Naive thymus-derived CD4-positive, alpha-beta T cell (primary cell): ENCODE measurements at regions of chr4 and their contacts with region 1.

Region 1: GRCh38 chr4:87006676-87007527 is 72.1 kb downstream of the AFF1 start:
- DNase-seq: peak; percentile 85 to 92 (median 89)
- ATAC-seq: peak; percentile 88
- H3K4me3 ChIP-seq: peak overlapping the region; percentile 85
- H3K4me3 Mint-ChIP-seq: peak overlapping the region; percentile 87 to 100 (median 93)
- H3K27ac ChIP-seq: peak overlapping the region; percentile 91
- H3K27ac Mint-ChIP-seq: peak overlapping the region; percentile 95 to 99 (median 98)
- H3K4me1 ChIP-seq: peaks cover 25 to 28% of the 10 kb centered on the region in 2 donors
- H3K4me1 Mint-ChIP-seq: peaks cover 39 to 72% (median 59%) of the 10 kb centered on the region in 7 donors
- H3K27me3 ChIP-seq: no peaks in the 10 kb centered on the region
- H3K27me3 Mint-ChIP-seq: no peaks in the 10 kb centered on the region

Region 2: DNA sequence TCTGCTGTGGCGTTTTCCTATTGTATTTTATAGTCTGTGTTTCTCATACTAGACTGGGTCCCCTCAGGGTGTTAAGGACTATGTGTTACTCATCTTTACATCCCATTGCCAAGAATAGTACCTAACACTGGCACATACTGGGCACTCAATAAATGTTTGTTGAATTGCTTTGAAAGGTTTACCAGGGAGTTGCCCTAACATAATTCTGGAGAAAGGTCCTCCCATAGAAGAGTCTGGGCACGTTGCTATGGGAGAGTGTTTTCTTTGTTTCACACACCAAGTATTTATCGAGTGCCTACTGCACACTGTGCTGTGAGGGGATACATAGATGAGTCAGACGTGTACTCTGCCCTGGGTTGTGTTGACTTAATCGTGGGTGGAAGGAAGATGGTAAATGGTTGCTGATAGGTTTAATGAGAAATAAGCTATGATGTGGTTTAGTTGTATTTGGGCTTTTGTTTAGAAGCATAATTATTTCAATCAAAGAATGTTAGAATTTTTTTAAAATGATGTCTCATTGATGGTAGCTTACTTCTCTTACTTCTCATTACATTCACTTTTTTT is 29.2 kb before region 1 on chr4:
- CTCF ChIA-PET with region 1: no interaction called
- POLR2A ChIA-PET with region 1: interaction called, 4 read pairs
- intact Hi-C with region 1: loop called (anchors 2 to 5 kb)
- DNase-seq: no peak
- ATAC-seq: no peak
- H3K4me3 ChIP-seq: no peak overlapping the region
- H3K4me3 Mint-ChIP-seq: no peak overlapping the region
- H3K27ac ChIP-seq: no peak overlapping the region
- H3K27ac Mint-ChIP-seq: peak overlapping the region in 3 of 9 donors; percentile 18 to 72 (median 66)
- H3K4me1 ChIP-seq: peaks cover 0 to 11% of the 10 kb centered on the region in 2 donors
- H3K4me1 Mint-ChIP-seq: peaks cover 36 to 88% (median 60%) of the 10 kb centered on the region in 7 donors
- H3K27me3 ChIP-seq: no peaks in the 10 kb centered on the region
- H3K27me3 Mint-ChIP-seq: no peaks in the 10 kb centered on the region

Region 3: DNA sequence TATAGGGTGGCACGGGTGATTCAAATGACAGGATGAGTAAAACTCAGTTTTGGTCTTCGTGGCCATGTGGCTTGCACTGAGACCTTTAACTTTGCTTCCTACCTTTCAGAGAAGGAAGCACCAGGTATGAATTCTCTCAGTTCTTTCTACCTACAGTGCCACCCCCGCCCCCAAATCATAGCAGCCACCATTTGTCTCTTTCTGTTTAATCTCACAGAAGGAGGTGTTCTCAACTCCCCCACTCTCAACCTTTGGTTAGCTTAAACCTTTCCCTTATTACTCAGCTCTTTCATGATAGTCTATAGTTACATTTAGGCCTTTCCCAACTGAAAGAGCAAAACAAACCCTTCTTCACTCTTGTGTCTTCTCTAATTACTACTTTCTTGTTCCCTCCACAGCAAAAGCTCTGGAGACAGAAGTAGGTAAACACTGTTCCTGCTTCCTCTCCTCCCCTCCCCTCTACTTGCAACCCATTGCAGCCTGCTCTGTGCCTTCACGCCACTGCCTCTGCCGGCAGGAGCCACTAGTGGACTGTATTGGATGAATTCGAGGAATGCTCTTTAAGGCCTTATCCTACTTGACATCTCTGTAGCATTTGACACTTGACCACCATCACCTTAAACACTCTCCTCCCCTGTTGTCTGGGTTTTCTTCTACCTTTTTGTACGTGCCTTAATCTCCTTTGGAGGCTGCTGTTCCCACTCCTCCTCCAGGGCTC is 51.6 kb after region 1 on chr4:
- CTCF ChIA-PET with region 1: no interaction called
- POLR2A ChIA-PET with region 1: no interaction called
- intact Hi-C with region 1: loop called in 1 of 2 experiments (anchors 5 kb)
- DNase-seq: peak in 1 of 9 donors; percentile 30
- ATAC-seq: peak; percentile 32
- H3K4me3 ChIP-seq: no peak overlapping the region
- H3K4me3 Mint-ChIP-seq: peak overlapping the region in 3 of 10 donors; percentile 2 to 41 (median 18)
- H3K27ac ChIP-seq: no peak overlapping the region
- H3K27ac Mint-ChIP-seq: peak overlapping the region in 6 of 9 donors; percentile 2 to 69 (median 46)
- H3K4me1 ChIP-seq: peaks cover 0 to 5% of the 10 kb centered on the region in 2 donors
- H3K4me1 Mint-ChIP-seq: peaks cover 36 to 82% (median 70%) of the 10 kb centered on the region in 7 donors
- H3K27me3 ChIP-seq: no peaks in the 10 kb centered on the region
- H3K27me3 Mint-ChIP-seq: no peaks in the 10 kb centered on the region

Region 4: DNA sequence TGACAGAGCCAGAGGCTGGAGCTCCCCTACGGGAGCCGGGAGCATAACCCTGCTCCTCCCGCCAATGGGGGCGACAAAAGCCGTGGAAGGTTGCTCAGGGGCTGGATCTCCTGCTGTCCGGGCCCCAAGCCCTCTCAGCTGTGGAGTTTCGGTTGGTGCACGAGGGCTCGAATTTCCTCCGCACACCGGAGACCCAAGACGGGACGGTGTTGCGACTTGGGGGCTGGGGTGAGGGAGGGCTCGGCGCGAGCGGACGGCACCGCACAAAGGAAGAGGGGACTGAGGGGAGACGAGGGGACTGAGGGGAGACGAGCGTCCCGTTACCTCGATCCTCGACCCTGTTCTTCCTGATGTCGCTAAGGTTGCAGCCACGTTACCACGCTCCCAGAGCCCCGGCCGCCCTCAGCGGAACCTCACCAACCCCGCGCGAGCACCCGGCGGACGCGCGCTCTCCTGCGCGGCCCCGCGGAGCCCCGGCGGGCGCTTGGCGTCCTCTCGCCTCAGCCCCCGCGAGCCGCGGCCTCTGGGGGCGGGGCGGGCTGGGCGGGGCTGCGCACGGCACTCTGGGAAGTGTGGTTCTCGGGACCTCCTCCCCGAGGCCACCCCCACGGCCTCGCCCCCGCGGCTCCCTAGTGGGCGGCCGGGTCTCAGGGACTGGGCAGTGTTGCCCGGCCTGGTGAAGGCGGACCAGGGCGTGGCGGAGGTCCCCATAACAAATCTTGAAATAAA is 213.4 kb after region 1 on chr4 and contains the start of gene KLHL8:
- CTCF ChIA-PET with region 1: no interaction called
- POLR2A ChIA-PET with region 1: interaction called, 7 read pairs
- intact Hi-C with region 1: loop called (anchors 1 kb)
- DNase-seq: peak; percentile 82 to 94 (median 89)
- ATAC-seq: peak; percentile 97
- H3K4me3 ChIP-seq: peak within 1 kb of the TSS; percentile 97
- H3K4me3 Mint-ChIP-seq: peak within 1 kb of the TSS; percentile 73 to 99 (median 94)
- H3K27ac ChIP-seq: peak within 1 kb of the TSS; percentile 92
- H3K27ac Mint-ChIP-seq: peak within 1 kb of the TSS; percentile 71 to 95 (median 91)
- H3K4me1 ChIP-seq: peaks cover 0 to 8% of the 10 kb centered on the region in 2 donors
- H3K4me1 Mint-ChIP-seq: peaks cover 6 to 32% (median 17%) of the 10 kb centered on the region in 7 donors
- H3K27me3 ChIP-seq: no peaks in the 10 kb centered on the region
- H3K27me3 Mint-ChIP-seq: peaks cover 0 to 14% (median 0%) of the 10 kb centered on the region in 5 donors
- total RNA-seq, gene KLHL8: 10.9 to 15.7 (median 11.6) TPM

Region 5: GRCh38 chr4:88334967-88335665 is 1328.2 kb after region 1 on chr4:
- CTCF ChIA-PET with region 1: no interaction called
- POLR2A ChIA-PET with region 1: no interaction called
- intact Hi-C with region 1: no loop called
- DNase-seq: no peak
- ATAC-seq: no peak
- H3K4me3 ChIP-seq: no peak overlapping the region
- H3K4me3 Mint-ChIP-seq: no peak overlapping the region
- H3K27ac ChIP-seq: no peak overlapping the region
- H3K27ac Mint-ChIP-seq: no peak overlapping the region
- H3K4me1 ChIP-seq: no peaks in the 10 kb centered on the region
- H3K4me1 Mint-ChIP-seq: peaks cover 0 to 17% (median 6%) of the 10 kb centered on the region in 7 donors
- H3K27me3 ChIP-seq: no peaks in the 10 kb centered on the region
- H3K27me3 Mint-ChIP-seq: peaks cover 0 to 5% (median 3%) of the 10 kb centered on the region in 5 donors

Region 6: GRCh38 chr4:88378691-88379559 is 1372.0 kb after region 1 on chr4 and contains the start of gene HERC6:
- CTCF ChIA-PET with region 1: no interaction called
- POLR2A ChIA-PET with region 1: no interaction called
- intact Hi-C with region 1: loop called in 1 of 2 experiments (anchors 2 kb)
- DNase-seq: peak; percentile 49 to 77 (median 70)
- ATAC-seq: peak; percentile 80
- H3K4me3 ChIP-seq: peak within 1 kb of the TSS; percentile 95
- H3K4me3 Mint-ChIP-seq: peak within 1 kb of the TSS; percentile 88 to 98 (median 94)
- H3K27ac ChIP-seq: peak within 1 kb of the TSS; percentile 92
- H3K27ac Mint-ChIP-seq: peak within 1 kb of the TSS; percentile 91 to 99 (median 94)
- H3K4me1 ChIP-seq: peaks cover 21 to 27% of the 10 kb centered on the region in 2 donors
- H3K4me1 Mint-ChIP-seq: peaks cover 24 to 60% (median 46%) of the 10 kb centered on the region in 7 donors
- H3K27me3 ChIP-seq: no peaks in the 10 kb centered on the region
- H3K27me3 Mint-ChIP-seq: no peaks in the 10 kb centered on the region
- total RNA-seq, gene HERC6: 12.6 to 43.5 (median 23.0) TPM

Region 7: GRCh38 chr4:88823058-88823919 is 1816.4 kb after region 1 on chr4:
- CTCF ChIA-PET with region 1: no interaction called
- POLR2A ChIA-PET with region 1: no interaction called
- intact Hi-C with region 1: loop called in 1 of 2 experiments (anchors 2 kb)
- DNase-seq: peak; percentile 23 to 90 (median 84)
- ATAC-seq: peak; percentile 96
- H3K4me3 ChIP-seq: peak overlapping the region; percentile 62
- H3K4me3 Mint-ChIP-seq: peak overlapping the region; percentile 88 to 99 (median 96)
- H3K27ac ChIP-seq: peak overlapping the region; percentile 83
- H3K27ac Mint-ChIP-seq: peak overlapping the region; percentile 88 to 99 (median 98)
- H3K4me1 ChIP-seq: peaks cover 0 to 13% of the 10 kb centered on the region in 2 donors
- H3K4me1 Mint-ChIP-seq: peaks cover 0 to 46% (median 37%) of the 10 kb centered on the region in 7 donors
- H3K27me3 ChIP-seq: no peaks in the 10 kb centered on the region
- H3K27me3 Mint-ChIP-seq: no peaks in the 10 kb centered on the region